Endothelial cell of umbilical vein (primary cell): ENCODE measurements at regions of chrX and their contacts with region 1.

Region 1: GRCh38 chrX:40266490-40267333 is 169.0 kb upstream of the BCOR start:
- DNase-seq: peak; percentile 45
- H3K4me3 ChIP-seq: peak overlapping the region in 2 of 3 experiments; percentile 10 to 38
- H3K27ac ChIP-seq: peak overlapping the region; percentile 37
- H3K4me1 ChIP-seq: peaks cover 20% of the 10 kb centered on the region
- H3K27me3 ChIP-seq: no peaks in the 10 kb centered on the region
- CTCF ChIP-seq: peak; percentile 68 to 71
- POLR2A ChIP-seq: no peak

Region 2: GRCh38 chrX:39814391-39814790 is 452.3 kb before region 1 on chrX:
- CTCF ChIA-PET with region 1: no interaction called
- POLR2A ChIA-PET with region 1: no interaction called
- dilution Hi-C with region 1: no loop called
- intact Hi-C with region 1: loop called (anchors 1 kb)
- DNase-seq: peak; percentile 20
- H3K4me3 ChIP-seq: no peak overlapping the region
- H3K27ac ChIP-seq: no peak overlapping the region
- H3K4me1 ChIP-seq: peaks cover 16% of the 10 kb centered on the region
- H3K27me3 ChIP-seq: no peaks in the 10 kb centered on the region
- CTCF ChIP-seq: peak; percentile 27 to 31
- POLR2A ChIP-seq: no peak

Region 3: DNA sequence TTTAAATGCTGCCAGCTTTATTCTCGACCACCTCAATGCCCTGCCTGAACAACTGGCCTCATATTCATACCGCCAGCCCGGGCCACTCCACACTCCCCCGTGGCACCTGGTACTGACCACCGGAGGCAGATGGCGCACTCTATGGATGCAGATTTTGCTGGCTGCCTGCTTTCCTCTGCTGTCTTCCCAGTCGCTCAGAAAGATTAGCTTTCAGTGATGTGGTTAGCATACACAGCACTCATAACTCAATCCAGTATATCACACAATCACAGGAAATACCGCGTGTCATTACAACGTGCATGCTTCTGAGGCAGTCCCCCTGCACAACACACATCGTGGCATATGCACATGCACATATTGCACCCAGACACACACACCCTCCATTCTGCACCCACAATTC is 21.7 kb before region 1 on chrX:
- CTCF ChIA-PET with region 1: interaction called, 4 read pairs
- POLR2A ChIA-PET with region 1: no interaction called
- dilution Hi-C with region 1: no loop called
- intact Hi-C with region 1: loop called (anchors 1 kb)
- DNase-seq: peak; percentile 77
- H3K4me3 ChIP-seq: no peak overlapping the region
- H3K27ac ChIP-seq: no peak overlapping the region
- H3K4me1 ChIP-seq: peaks cover 3% of the 10 kb centered on the region
- H3K27me3 ChIP-seq: no peaks in the 10 kb centered on the region
- CTCF ChIP-seq: no peak
- POLR2A ChIP-seq: no peak

Region 4: DNA sequence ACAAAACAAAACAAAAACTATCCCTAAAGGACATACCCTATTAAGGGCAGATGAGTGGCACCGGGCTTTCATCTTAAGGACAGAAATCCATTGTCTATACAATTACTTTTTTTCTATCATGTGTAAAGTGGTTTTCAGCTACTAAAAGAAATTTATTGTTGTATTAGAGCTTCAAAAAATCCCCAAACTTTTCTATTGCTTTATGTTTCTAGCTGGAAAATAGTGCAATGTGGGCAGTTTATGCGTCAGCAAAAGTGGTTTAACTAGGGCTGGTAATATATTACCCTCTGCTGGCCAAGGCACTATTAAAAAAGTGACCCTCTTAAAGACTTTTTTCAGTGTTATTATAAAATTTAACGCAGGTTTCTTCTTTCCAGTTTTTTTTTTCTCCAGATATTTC is 1441.8 kb after region 1 on chrX:
- CTCF ChIA-PET with region 1: no interaction called
- POLR2A ChIA-PET with region 1: no interaction called
- dilution Hi-C with region 1: no loop called
- intact Hi-C with region 1: no loop called
- DNase-seq: no peak
- H3K4me3 ChIP-seq: no peak overlapping the region
- H3K27ac ChIP-seq: no peak overlapping the region
- H3K4me1 ChIP-seq: no peaks in the 10 kb centered on the region
- H3K27me3 ChIP-seq: no peaks in the 10 kb centered on the region
- CTCF ChIP-seq: no peak
- POLR2A ChIP-seq: no peak